Dendritic cell treated with granulocyte-macrophage colony-stimulating factor and Interleukin-4, amounts not matched to agents 40 ng/mL and 50 ng/mL, for 4 days (primary cell): ENCODE measurements at regions of chr4 and their contacts with region 1.

Region 1: DNA sequence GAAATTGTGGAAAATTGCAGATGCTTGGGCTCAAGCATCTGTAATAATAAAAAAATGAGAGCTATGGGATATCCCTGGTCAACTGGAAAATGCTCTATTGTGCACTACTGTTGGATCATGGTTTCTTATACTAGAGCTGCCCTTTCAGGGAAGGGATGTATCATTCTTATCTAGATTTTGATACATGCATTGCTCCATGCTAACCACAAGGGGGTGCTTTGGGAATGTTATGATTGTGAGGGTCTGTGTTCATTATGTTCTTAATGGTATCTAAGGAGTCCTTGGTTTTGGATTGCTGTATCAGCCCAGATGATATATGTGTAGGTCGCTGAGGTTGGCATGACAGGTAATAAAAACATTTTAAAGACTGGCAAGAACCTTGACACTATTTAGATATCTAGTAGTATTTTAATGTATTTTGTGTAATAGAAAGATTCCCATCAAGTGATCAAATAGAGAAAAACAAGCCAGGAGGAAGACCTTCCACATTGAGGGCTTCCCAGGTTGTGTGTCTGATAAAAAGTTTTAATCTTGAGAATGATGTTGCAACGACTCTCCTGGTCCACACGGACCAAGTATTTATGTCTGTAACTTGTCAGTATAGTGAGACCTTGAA is 49.2 kb upstream of the TLR2 start:
- H3K4me3 Mint-ChIP-seq: no peak overlapping the region
- H3K27ac Mint-ChIP-seq: no peak overlapping the region
- H3K4me1 Mint-ChIP-seq: peaks cover 19% of the 10 kb centered on the region
- H3K27me3 Mint-ChIP-seq: no peaks in the 10 kb centered on the region

Region 2: DNA sequence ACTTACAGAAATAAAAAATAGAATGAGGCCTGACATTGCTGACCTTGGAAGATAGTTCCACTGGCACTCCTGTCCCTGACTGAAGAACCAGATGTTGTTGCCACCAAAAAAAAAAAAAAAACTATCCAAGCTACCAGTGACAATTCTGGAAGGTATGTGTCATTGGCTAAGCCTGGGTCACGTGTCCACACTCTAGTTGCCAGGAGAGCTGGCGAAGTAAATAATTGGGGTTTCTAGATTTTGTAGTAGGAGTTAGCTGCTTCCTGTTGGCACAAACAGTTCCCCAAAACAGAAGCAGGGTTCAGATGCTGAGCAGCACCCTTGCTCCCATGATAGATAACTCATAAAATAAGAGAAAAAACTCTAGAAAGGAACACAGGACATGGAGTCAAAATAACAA is 269.8 kb before region 1 on chr4:
- intact Hi-C with region 1: no loop called
- H3K4me3 Mint-ChIP-seq: no peak overlapping the region
- H3K27ac Mint-ChIP-seq: no peak overlapping the region
- H3K4me1 Mint-ChIP-seq: peaks cover 28% of the 10 kb centered on the region
- H3K27me3 Mint-ChIP-seq: no peaks in the 10 kb centered on the region

Region 3: DNA sequence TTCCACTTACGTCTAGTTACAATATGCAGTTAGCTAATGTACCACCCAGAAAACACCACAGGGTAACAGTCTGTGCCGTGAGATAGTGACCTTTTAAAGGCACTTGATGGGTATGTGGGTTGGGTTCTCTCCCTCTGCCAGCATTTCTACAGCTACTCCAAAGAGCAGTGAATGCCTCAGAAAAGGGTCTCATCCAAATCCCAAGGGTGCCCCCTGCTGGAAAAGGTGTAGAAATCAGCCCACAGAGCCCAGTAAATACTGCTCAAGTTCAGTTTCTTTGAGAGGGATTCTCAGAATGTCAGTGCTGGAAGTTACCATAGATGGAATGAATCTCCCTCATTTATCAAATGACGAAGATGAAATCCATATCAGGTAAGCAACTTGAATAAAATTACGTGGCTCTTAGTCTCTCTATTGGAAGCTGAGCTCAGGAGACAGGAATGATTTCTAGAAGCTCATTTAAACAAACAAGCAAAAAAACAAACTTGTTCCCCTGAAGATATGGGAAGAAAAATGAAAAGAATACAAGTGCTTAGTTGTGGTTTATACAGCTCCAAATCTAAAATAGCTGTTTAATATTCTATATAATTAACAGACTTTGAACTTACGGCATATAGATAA is 115.5 kb after region 1 on chr4:
- intact Hi-C with region 1: loop called (anchors 1 kb)
- H3K4me3 Mint-ChIP-seq: no peak overlapping the region
- H3K27ac Mint-ChIP-seq: no peak overlapping the region
- H3K4me1 Mint-ChIP-seq: peaks cover 35% of the 10 kb centered on the region
- H3K27me3 Mint-ChIP-seq: no peaks in the 10 kb centered on the region

Region 4: GRCh38 chr4:153809307-153809706 is 174.5 kb after region 1 on chr4:
- intact Hi-C with region 1: no loop called
- H3K4me3 Mint-ChIP-seq: no peak overlapping the region
- H3K27ac Mint-ChIP-seq: no peak overlapping the region
- H3K4me1 Mint-ChIP-seq: peaks cover 7% of the 10 kb centered on the region
- H3K27me3 Mint-ChIP-seq: peaks cover 11% of the 10 kb centered on the region